CD8-positive, alpha-beta T cell (primary cell): ENCODE measurements at regions of chr14 and their contacts with region 1.

Region 1: DNA sequence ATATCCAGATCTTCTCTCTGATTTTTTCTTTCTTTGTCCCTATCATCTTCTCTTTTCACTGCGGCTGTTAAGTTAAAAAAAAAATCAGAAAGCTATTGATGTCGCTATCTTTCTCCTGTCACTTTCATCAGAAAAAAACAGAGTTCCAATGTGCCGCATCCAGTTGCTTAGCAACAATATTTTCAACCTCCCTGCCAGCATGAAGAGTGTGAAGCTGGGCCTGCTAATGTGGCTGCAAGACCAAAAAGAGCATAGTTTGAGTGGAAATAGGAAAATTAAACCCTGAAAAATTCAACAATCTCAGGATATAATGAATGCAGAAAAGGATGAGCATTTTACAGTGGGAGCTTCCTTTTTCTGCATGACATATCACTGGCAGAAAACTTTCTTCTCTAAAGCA is 1025.4 kb upstream of the LRFN5 start:
- DNase-seq: no peak
- ATAC-seq: no peak
- H3K4me3 ChIP-seq: no peak overlapping the region
- H3K4me3 Mint-ChIP-seq: no peak overlapping the region
- H3K27ac ChIP-seq: no peak overlapping the region
- H3K27ac Mint-ChIP-seq: no peak overlapping the region
- H3K4me1 ChIP-seq: no peaks in the 10 kb centered on the region
- H3K4me1 Mint-ChIP-seq: no peaks in the 10 kb centered on the region
- H3K27me3 ChIP-seq: no peaks in the 10 kb centered on the region
- H3K27me3 Mint-ChIP-seq: no peaks in the 10 kb centered on the region
- CTCF ChIP-seq: no peak

Region 2: GRCh38 chr14:41461380-41461779 is 880.1 kb after region 1 on chr14:
- CTCF ChIA-PET with region 1: no interaction called
- POLR2A ChIA-PET with region 1: no interaction called
- intact Hi-C with region 1: loop called in 1 of 2 experiments (anchors 5 kb)
- DNase-seq: no peak
- ATAC-seq: no peak
- H3K4me3 ChIP-seq: no peak overlapping the region
- H3K4me3 Mint-ChIP-seq: no peak overlapping the region
- H3K27ac ChIP-seq: no peak overlapping the region
- H3K27ac Mint-ChIP-seq: no peak overlapping the region
- H3K4me1 ChIP-seq: no peaks in the 10 kb centered on the region
- H3K4me1 Mint-ChIP-seq: no peaks in the 10 kb centered on the region
- H3K27me3 ChIP-seq: no peaks in the 10 kb centered on the region
- H3K27me3 Mint-ChIP-seq: no peaks in the 10 kb centered on the region
- CTCF ChIP-seq: no peak

Region 3: DNA sequence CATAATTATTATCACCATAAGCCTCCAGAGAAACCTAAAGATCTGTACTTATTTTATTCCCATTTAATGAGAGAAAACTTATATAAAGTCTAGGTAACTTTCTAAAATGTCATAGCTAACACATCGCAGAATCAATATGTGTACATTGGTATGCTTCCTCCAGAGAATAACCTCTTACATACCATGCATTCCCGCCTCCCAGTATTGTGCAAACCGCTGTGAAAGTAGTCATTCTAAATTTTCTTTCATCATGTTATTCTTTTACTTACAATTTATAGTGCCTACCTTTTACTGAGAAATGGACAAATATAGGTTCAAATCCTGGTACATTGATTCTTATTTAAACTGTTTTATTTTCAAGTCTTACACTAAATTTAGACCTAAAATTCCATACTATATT is 1488.8 kb after region 1 on chr14:
- CTCF ChIA-PET with region 1: no interaction called
- POLR2A ChIA-PET with region 1: no interaction called
- intact Hi-C with region 1: loop called in 1 of 2 experiments (anchors 5 kb)
- DNase-seq: no peak
- ATAC-seq: no peak
- H3K4me3 ChIP-seq: no peak overlapping the region
- H3K4me3 Mint-ChIP-seq: no peak overlapping the region
- H3K27ac ChIP-seq: no peak overlapping the region
- H3K27ac Mint-ChIP-seq: no peak overlapping the region
- H3K4me1 ChIP-seq: no peaks in the 10 kb centered on the region
- H3K4me1 Mint-ChIP-seq: no peaks in the 10 kb centered on the region
- H3K27me3 ChIP-seq: no peaks in the 10 kb centered on the region
- H3K27me3 Mint-ChIP-seq: no peaks in the 10 kb centered on the region
- CTCF ChIP-seq: no peak